ENCODE measurements at regions of chr6 and their contacts with region 1.

Region 1: DNA sequence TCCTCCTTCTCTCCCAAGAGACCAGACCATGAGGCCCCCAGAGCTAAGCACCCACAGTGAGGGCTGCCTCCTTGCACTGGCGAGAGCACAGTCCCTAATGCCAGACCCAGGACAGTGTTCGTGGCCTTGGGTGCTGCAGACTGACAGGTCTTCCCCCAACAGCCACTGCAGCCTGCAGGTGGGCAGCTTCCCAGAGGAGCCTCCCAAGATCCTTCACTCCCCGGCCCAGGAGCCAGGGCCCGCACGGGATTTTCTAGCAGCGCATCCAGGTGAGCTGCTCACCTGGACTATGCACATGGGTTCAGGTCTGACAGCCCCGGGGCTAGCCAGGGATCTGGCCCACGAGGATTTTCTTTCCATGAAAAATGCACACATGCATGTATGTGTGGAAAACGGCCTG is 41.7 kb downstream of the SUMO4 start:
- DNase-seq: no peak
- H3K4me3 ChIP-seq: no peak overlapping the region
- H3K27ac ChIP-seq: no peak overlapping the region
- H3K4me1 ChIP-seq: no peaks in the 10 kb centered on the region
- H3K27me3 ChIP-seq: no peaks in the 10 kb centered on the region
- CTCF ChIP-seq: no peak
- POLR2A ChIP-seq: no peak

Region 2: GRCh38 chr6:149459761-149460160 is 18.0 kb after region 1 on chr6:
- intact Hi-C with region 1: loop called (anchors 1 kb)
- DNase-seq: no peak
- H3K4me3 ChIP-seq: no peak overlapping the region
- H3K27ac ChIP-seq: no peak overlapping the region
- H3K4me1 ChIP-seq: peaks cover under 1% of the 10 kb centered on the region in 2 donors
- H3K27me3 ChIP-seq: no peaks in the 10 kb centered on the region
- CTCF ChIP-seq: no peak
- POLR2A ChIP-seq: no peak

Measured in breast epithelium (tissue), 4 donors.